Activated CD8-positive, alpha-beta T cell treated with anti-CD3 and anti-CD28 coated beads, Interleukin-2, amount 10 ng/mL, durations not matched to agents 7 days and 5 days (primary cell): ENCODE measurements at regions of chr1 and their contacts with region 1.

Region 1: DNA sequence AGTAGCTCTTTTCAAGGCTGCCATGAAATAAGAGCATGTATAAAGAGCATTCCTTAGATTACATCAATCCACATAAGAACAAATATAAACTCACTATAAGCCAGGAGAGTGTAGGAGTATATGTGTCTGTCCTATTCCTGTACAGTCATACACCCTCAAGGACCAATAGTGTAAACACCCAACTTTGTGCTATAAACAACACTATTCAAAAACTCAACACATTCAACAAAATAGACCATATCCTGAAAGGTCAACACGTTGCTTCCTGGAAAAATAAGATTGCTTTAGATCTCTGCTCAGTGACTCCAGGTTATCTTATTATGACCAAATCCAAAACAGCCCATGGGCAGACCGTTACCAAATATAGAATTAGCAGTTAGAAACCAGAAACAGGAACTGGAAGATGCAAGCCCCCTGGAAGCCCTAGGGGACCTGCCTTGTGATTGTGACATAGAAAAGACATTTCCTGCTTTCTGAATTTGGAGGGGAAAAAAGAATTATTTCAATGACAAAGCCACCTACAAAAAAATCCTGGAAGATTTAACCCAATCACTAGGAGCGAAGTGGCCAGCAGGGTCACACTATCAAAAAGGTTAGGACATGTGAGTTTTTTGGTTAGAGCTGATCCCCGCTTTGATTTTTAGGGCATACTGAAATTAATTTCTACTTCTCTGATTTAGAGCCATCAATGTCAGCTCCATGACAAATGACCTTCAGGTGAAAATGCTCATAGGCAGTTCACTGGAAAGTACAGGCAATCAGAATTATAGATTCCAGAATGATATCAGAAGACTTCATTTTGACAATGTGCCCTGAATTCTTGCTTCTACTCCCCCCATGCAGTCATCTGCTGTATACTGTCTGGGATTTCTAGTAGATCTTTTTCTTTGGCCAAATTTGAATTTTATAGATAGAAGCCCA is 59.9 kb downstream of the LRRC8C start:
- DNase-seq: no peak
- ATAC-seq: peak; percentile 45
- H3K4me3 Mint-ChIP-seq: no peak overlapping the region
- H3K27ac Mint-ChIP-seq: peak overlapping the region; percentile 74
- H3K4me1 Mint-ChIP-seq: peaks cover 61% of the 10 kb centered on the region
- H3K27me3 Mint-ChIP-seq: no peaks in the 10 kb centered on the region

Region 2: GRCh38 chr1:89734442-89734841 is 41.6 kb after region 1 on chr1:
- CTCF ChIA-PET with region 1: no interaction called
- POLR2A ChIA-PET with region 1: no interaction called
- DNase-seq: no peak
- ATAC-seq: no peak
- H3K4me3 Mint-ChIP-seq: no peak overlapping the region
- H3K27ac Mint-ChIP-seq: no peak overlapping the region
- H3K4me1 Mint-ChIP-seq: peaks cover 32% of the 10 kb centered on the region
- H3K27me3 Mint-ChIP-seq: no peaks in the 10 kb centered on the region

Region 3: GRCh38 chr1:89757532-89757931 is 64.7 kb after region 1 on chr1:
- CTCF ChIA-PET with region 1: interaction called, 50 read pairs
- POLR2A ChIA-PET with region 1: interaction called, 4 read pairs
- DNase-seq: peak; percentile 71
- ATAC-seq: peak; percentile 77
- H3K4me3 Mint-ChIP-seq: peak overlapping the region; percentile 73
- H3K27ac Mint-ChIP-seq: peak overlapping the region; percentile 92
- H3K4me1 Mint-ChIP-seq: peaks cover 89% of the 10 kb centered on the region
- H3K27me3 Mint-ChIP-seq: no peaks in the 10 kb centered on the region